ENCODE measurements at regions of chrX and their contacts with region 1.

Region 1: DNA sequence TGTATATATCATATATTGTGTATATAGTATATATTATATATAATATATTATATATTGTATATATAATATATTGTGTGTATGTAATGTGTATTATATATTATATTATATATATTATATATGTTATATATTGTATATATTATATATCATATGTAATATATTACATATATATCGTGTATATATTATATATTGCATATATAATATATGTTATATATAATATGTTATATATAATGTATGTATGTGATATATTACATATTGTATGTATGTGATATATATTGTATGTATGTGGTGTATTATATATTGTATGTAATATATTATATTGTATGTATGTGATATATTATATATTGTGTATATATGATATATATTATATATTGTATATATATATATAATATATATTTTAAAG is 30.5 kb downstream of the RAB40A start:
- DNase-seq: no peak
- ATAC-seq: no peak
- H3K4me3 ChIP-seq: no peak overlapping the region
- H3K27ac ChIP-seq: no peak overlapping the region
- H3K4me1 ChIP-seq: no peaks in the 10 kb centered on the region
- H3K27me3 ChIP-seq: no peaks in the 10 kb centered on the region
- CTCF ChIP-seq: no peak
- EP300 ChIP-seq: no peak
- POLR2A ChIP-seq: no peak
- RAD21 ChIP-seq: no peak

Region 2: DNA sequence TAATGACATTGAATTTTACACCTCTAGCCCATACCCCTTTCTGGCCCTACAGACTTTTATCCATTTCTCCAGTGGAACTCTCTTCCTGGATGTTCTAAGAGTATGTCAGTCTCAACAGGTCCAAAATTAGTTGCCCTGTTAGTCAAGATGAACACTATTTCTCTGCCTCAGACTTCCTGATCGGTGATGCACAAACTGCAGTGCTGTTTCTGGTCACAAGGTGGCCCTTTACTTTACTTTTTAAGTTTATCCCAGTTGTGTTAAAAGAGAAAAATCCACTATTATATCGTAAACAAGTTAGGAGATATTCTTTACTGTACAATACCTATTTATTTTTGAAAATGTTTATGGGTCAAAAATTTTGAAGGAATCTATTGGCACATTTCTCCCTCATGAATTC is 145.7 kb before region 1 on chrX:
- CTCF ChIA-PET with region 1: no interaction called
- POLR2A ChIA-PET with region 1: no interaction called
- in situ Hi-C with region 1: no loop called
- intact Hi-C with region 1: loop called (anchors 1 kb)
- DNase-seq: peak; percentile 16 to 50 (median 20)
- ATAC-seq: peak; percentile 81
- H3K4me3 ChIP-seq: no peak overlapping the region
- H3K27ac ChIP-seq: no peak overlapping the region
- H3K4me1 ChIP-seq: no peaks in the 10 kb centered on the region; a peak in 1 of 5 replicates
- H3K27me3 ChIP-seq: no peaks in the 10 kb centered on the region
- CTCF ChIP-seq: peak; percentile 41 to 62 (median 58); a peak in 5 of 6 replicates
- EP300 ChIP-seq: no peak
- POLR2A ChIP-seq: no peak
- RAD21 ChIP-seq: peak; percentile 49 to 69

Measured in K562 (cell line).